ENCODE measurements at regions of chr21 and their contacts with region 1.

Region 1: GRCh38 chr21:30831194-30831765 is 1.7 kb upstream of the KRTAP7-1 start:
- DNase-seq: peak in 1 of 3 donors; percentile 12
- ATAC-seq: no peak
- H3K4me3 ChIP-seq: no peak overlapping the region
- H3K4me1 ChIP-seq: no peaks in the 10 kb centered on the region
- CTCF ChIP-seq: no peak

Region 2: DNA sequence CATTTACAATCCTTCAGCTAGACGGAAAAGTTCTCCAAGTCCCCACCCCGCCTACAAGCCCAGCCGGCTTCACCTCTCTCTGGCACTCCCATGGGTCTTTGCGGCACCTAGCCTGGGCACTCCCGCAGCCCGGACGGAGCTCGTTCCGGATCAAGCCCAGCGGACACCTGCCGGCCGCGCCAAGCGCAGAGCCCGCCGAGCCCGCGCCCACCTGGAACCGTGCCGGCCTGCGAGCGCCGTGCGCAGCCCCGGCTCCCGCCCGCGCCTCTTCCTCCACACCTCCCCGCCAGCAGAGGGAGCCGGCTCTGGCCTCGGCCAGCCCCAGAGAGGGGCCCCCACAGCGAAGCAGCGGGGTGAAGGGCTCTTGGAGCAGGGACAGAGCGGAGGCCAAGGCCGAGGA is 257.0 kb after region 1 on chr21:
- intact Hi-C with region 1: loop called in 1 of 2 experiments (anchors 10 kb)
- DNase-seq: no peak
- ATAC-seq: no peak
- H3K4me3 ChIP-seq: no peak overlapping the region
- H3K4me1 ChIP-seq: no peaks in the 10 kb centered on the region
- CTCF ChIP-seq: no peak

Measured in mucosa of descending colon (tissue), 3 donors.